ENCODE measurements at regions of chr2 and their contacts with region 1.

Region 1: DNA sequence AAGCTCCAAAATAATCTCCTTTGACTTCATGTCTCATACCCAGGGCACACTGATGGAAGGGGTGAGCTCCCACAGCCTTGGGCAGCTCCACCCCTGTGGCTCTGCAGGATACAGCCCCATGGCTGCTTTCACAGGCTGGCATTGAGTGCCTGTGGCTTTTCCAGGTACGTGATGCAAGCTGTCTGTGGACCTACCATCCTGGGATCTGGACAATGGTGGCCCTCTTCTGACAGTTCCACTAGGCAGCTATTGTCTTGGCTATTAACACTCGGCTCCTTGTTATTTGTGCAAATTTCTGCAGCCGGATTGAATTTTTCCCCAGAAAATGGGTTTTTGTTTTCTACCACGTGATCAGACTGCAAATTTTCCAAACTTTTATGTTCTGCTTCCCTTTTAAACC is 634.2 kb downstream of the TSN start:
- DNase-seq: no peak
- ATAC-seq: no peak
- H3K4me3 ChIP-seq: no peak overlapping the region
- H3K27ac ChIP-seq: no peak overlapping the region
- H3K4me1 ChIP-seq: no peaks in the 10 kb centered on the region
- H3K27me3 ChIP-seq: no peaks in the 10 kb centered on the region
- CTCF ChIP-seq: no peak

Region 2: DNA sequence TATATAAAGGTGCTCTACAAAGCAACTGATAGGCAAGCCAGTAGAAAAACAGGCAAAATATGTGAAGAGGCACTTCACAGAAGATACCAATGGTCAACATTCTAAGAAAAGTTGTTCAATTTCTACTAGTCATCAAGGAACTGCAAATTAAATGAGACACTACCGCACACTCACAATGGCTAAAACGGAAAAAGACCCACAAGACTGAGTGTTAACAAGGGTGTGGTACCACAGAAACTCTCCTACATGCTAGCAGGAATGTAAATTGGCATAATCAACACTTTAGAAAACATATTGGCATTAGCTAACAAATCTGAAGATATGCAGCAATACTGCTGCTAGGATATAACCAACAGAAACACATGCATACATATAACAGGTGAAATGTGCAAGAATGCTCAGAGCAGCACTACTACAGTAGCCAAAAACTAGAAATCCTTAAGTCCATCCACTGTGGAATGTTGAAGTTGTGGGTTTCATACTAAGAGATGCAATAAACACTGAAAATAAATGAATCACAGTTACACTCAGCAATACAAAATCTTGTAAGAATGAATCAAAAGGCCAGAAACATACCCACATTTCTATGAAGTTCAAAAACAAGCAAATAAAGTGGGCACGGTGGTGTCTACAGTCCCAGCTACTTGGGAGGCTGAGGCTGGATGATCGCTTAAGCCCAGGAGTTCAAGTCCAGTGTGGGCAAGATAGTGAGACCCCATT is 849.8 kb before region 1 on chr2:
- intact Hi-C with region 1: loop called in 1 of 2 experiments (anchors 10 kb)
- DNase-seq: no peak
- ATAC-seq: no peak
- H3K4me3 ChIP-seq: peak overlapping the region; percentile 0
- H3K27ac ChIP-seq: no peak overlapping the region
- H3K4me1 ChIP-seq: peaks cover 58% of the 10 kb centered on the region
- H3K27me3 ChIP-seq: no peaks in the 10 kb centered on the region
- CTCF ChIP-seq: no peak

Measured in psoas muscle (tissue), 8 donors.